Colonic mucosa (tissue), 4 donors: ENCODE measurements at regions of chr3 and their contacts with region 1.

Region 1: GRCh38 chr3:74267588-74268184 is 346.8 kb downstream of the CNTN3 start:
- DNase-seq: peak; percentile 38
- H3K4me3 ChIP-seq: no peak overlapping the region
- H3K27ac ChIP-seq: no peak overlapping the region
- H3K4me1 ChIP-seq: no peaks in the 10 kb centered on the region
- H3K27me3 ChIP-seq: no peaks in the 10 kb centered on the region
- CTCF ChIP-seq: peak; percentile 64

Region 2: DNA sequence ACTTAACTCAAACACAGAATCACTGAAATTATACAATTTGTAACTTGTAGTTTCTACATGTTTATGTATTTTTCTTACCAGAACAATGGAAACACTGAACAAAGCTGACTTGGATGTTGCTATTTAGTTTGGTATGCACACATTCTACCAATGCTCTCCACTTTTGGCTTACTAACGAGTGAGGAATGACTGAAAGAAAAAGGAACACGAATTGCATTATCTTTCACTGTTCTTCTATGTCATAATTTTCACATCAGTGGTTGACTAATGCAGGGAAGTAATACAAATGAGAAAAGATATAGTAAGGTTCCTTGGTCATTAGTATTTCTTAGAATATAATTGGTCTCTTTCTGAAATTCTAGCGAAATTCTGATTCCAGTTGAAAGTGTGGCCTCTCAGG is 356.6 kb after region 1 on chr3:
- intact Hi-C with region 1: loop called (anchors 10 kb)
- DNase-seq: no peak
- H3K4me3 ChIP-seq: no peak overlapping the region
- H3K27ac ChIP-seq: no peak overlapping the region
- H3K4me1 ChIP-seq: no peaks in the 10 kb centered on the region
- H3K27me3 ChIP-seq: no peaks in the 10 kb centered on the region
- CTCF ChIP-seq: no peak